H1 (cell line): ENCODE measurements at regions of chr3 and their contacts with region 1.

Region 1: DNA sequence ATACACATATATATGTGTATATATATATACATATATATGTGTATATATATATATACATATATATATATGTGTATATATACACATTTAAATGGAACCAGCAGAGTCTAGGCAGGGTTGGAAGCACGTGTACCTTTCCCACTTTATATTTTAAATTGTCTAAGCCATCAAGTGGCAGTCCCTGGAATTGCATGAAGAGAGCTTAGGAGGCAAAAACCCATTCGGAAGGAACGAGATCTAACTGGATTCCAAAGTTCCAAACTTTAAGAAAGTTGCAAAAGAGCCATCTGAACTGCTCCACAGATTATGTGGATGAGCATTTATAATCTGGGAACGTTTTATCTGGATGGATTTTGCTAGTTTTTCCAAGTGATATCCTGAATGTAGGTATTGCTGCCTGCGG is 186.5 kb downstream of the FOXP1 start:
- DNase-seq: no peak
- H3K4me3 ChIP-seq: no peak overlapping the region
- H3K27ac ChIP-seq: no peak overlapping the region
- H3K4me1 ChIP-seq: peaks cover 0 to 6% (median 0%) of the 10 kb centered on the region in 4 experiments; a peak in 1 of 7 replicates
- H3K27me3 ChIP-seq: no peaks in the 10 kb centered on the region
- CTCF ChIP-seq: peak in 2 of 3 experiments; percentile 17 to 53; a peak in 2 of 4 replicates
- EP300 ChIP-seq: no peak
- POLR2A ChIP-seq: no peak
- RAD21 ChIP-seq: peak; percentile 40 to 54

Region 2: DNA sequence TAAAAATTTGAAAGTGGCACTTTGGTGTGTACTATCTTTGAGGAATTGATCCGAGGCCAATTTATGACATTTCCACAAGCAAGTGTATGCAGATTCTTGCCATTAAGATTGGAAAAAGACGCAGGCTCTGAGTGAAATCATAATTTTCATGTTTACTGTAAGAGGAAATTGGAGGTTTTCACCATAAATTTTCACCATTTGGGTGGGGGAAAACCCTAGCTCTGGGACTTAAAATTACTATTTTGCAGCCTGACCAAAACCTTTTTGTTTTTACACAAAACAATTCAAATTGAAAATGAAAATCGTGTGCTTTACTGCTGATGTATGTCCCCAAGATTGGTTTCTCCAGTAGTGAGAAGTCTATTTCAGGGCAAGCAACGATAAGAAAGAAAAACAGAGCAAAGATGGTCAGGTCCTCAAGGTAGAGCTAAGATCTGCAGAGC is 96.1 kb before region 1 on chr3:
- CTCF ChIA-PET with region 1: no interaction called
- POLR2A ChIA-PET with region 1: no interaction called
- DNase-seq: no peak
- H3K4me3 ChIP-seq: no peak overlapping the region; a peak in 1 of 8 replicates
- H3K27ac ChIP-seq: no peak overlapping the region
- H3K4me1 ChIP-seq: peaks cover 2 to 37% (median 16%) of the 10 kb centered on the region in 4 experiments; a peak in 5 of 7 replicates
- H3K27me3 ChIP-seq: no peaks in the 10 kb centered on the region
- CTCF ChIP-seq: no peak
- EP300 ChIP-seq: no peak
- POLR2A ChIP-seq: no peak
- RAD21 ChIP-seq: no peak

Region 3: DNA sequence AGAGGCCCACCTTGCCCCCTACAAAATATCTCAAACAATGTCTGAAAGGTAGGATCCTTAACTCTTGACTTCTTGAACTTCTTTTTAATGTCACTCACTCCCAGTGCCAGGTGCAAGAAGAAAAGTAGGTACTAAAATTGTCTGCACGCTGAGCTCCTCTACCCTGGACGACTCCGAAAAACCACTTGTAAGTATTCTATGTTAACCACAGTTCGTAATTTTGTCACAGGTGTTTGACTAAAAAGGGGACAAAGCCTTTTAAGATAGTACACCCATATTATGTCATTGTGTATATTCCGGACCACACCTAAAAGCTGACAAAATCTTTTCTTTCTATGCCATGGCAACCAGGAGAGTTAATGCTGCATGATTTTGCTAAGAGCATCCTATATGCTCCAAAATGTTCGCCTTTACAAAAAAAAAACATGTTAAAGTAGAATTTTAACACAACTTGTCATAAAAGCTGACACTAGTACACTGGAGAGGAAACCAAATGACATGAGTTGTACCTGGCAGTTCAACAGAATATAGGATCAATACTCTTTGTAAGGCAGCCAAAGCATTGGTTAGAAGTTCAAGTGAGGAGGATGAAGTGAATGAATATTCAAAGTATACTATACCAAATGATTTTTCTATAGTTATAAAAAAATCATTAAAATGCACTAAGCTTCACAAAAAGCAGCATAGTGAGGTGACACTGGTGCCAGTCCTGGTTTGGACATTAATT is 24.0 kb before region 1 on chr3:
- CTCF ChIA-PET with region 1: interaction called, 12 read pairs
- POLR2A ChIA-PET with region 1: no interaction called
- DNase-seq: no peak
- H3K4me3 ChIP-seq: no peak overlapping the region
- H3K27ac ChIP-seq: no peak overlapping the region
- H3K4me1 ChIP-seq: peaks cover 2 to 6% (median 3%) of the 10 kb centered on the region in 4 experiments; a peak in 5 of 7 replicates
- H3K27me3 ChIP-seq: no peaks in the 10 kb centered on the region
- CTCF ChIP-seq: no peak
- EP300 ChIP-seq: no peak
- POLR2A ChIP-seq: no peak
- RAD21 ChIP-seq: no peak

Region 4: GRCh38 chr3:71384837-71385716 is 12.0 kb before region 1 on chr3:
- CTCF ChIA-PET with region 1: interaction called, 12 read pairs
- POLR2A ChIA-PET with region 1: no interaction called
- DNase-seq: no peak
- H3K4me3 ChIP-seq: no peak overlapping the region
- H3K27ac ChIP-seq: no peak overlapping the region
- H3K4me1 ChIP-seq: peaks cover 3 to 9% (median 9%) of the 10 kb centered on the region in 4 experiments; a peak in 5 of 7 replicates
- H3K27me3 ChIP-seq: no peaks in the 10 kb centered on the region
- CTCF ChIP-seq: no peak
- EP300 ChIP-seq: no peak
- POLR2A ChIP-seq: no peak
- RAD21 ChIP-seq: no peak

Region 5: DNA sequence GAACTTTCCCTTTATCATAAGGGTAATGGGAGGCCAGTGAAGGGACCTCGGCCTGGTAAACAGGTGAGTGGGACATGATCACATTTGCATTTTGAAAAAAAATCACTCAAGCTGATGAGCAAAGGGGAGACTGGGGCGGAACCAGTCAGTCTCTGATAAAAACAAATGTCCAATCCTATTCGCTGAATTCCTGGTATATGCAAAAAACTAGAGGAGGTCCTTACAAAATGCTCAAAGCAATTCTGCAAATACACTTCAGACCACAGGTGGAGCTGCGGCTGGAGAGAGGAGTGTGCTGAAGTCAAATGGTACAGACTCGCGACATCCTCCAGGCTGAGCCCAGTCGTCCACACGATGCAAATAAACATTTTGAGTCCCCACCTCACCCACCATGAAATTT is 19.8 kb after region 1 on chr3:
- CTCF ChIA-PET with region 1: interaction called, 16 read pairs
- POLR2A ChIA-PET with region 1: no interaction called
- DNase-seq: peak in 1 of 2 experiments; percentile 25
- H3K4me3 ChIP-seq: no peak overlapping the region
- H3K27ac ChIP-seq: no peak overlapping the region
- H3K4me1 ChIP-seq: peaks cover 0 to 5% (median 2%) of the 10 kb centered on the region in 4 experiments; a peak in 2 of 7 replicates
- H3K27me3 ChIP-seq: no peaks in the 10 kb centered on the region
- CTCF ChIP-seq: peak; percentile 28 to 75 (median 43); a peak in 3 of 4 replicates
- EP300 ChIP-seq: no peak
- POLR2A ChIP-seq: no peak
- RAD21 ChIP-seq: peak; percentile 46 to 58

Region 6: DNA sequence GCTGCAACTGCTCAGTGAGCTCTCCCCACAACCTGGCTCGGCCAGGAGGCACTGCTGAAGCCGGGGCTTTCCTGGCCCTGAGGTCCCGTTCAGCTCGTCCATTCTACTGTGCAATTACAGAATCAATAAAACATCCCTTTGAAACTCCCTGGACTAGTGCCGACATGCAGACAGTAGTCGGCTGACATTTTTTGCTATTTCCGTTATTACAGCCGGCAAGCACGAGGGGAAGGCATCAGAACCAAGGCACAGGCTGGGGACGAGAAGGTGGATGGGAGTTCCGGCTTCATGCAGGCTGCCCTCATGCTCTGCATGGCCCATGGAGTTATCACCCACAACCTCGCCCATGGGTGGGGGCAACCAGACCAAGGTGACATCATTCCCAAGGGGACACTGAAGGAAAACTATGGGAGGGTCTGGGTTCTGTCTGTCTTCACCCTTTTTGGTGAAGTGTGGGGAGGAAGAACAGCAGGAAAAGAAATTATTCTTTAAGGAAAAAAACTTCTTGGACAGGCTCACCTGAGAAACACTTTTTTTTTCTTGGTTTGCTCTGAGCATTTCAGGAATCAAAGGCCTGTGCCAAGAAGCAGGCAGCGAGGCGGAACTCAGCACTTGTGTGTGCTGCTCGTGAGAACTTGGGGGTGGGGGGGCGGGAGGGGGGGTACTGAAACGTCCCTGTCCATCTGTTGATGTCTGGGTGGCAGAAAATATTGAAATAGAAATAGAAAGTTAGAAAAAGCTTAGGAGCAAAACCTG is 32.0 kb after region 1 on chr3:
- CTCF ChIA-PET with region 1: interaction called, 10 read pairs
- POLR2A ChIA-PET with region 1: no interaction called
- DNase-seq: no peak
- H3K4me3 ChIP-seq: no peak overlapping the region
- H3K27ac ChIP-seq: no peak overlapping the region
- H3K4me1 ChIP-seq: peaks cover 0 to 9% (median 6%) of the 10 kb centered on the region in 4 experiments; a peak in 4 of 7 replicates
- H3K27me3 ChIP-seq: no peaks in the 10 kb centered on the region
- CTCF ChIP-seq: no peak
- EP300 ChIP-seq: no peak
- POLR2A ChIP-seq: no peak
- RAD21 ChIP-seq: no peak